ENCODE measurements at regions of chr2 and their contacts with region 1.

Region 1: GRCh38 chr2:203740780-203741281 is 34.4 kb downstream of the CD28 start:
- DNase-seq: peak; percentile 75
- H3K4me3 Mint-ChIP-seq: peak overlapping the region; percentile 48
- H3K27ac Mint-ChIP-seq: peak overlapping the region; percentile 94
- H3K4me1 Mint-ChIP-seq: peaks cover 90% of the 10 kb centered on the region
- H3K27me3 Mint-ChIP-seq: no peaks in the 10 kb centered on the region

Region 2: DNA sequence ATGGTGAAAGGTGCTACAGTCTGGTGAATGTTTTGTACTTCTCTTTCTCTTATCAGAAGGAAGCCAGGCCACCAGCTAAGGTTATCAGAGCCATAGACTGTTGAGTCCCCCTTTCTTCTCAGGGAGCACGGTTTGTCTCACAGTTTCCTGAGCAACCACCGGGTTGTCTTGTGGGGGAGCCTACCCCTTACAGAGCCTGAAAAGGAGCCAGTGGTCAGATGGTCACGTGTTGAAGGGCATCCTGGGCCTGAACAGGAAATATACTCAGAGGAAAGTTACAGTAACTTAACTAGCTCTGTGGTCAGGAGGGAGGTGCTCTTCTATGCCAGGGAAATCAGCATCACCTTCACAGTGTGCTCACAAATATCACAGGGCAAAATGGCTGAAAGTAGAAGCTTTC is 22.7 kb before region 1 on chr2:
- CTCF ChIA-PET with region 1: interaction called, 13 read pairs
- POLR2A ChIA-PET with region 1: interaction called, 13 read pairs
- DNase-seq: peak; percentile 79
- H3K4me3 Mint-ChIP-seq: peak overlapping the region; percentile 65
- H3K27ac Mint-ChIP-seq: peak overlapping the region; percentile 91
- H3K4me1 Mint-ChIP-seq: peaks cover 98% of the 10 kb centered on the region
- H3K27me3 Mint-ChIP-seq: no peaks in the 10 kb centered on the region

Region 3: DNA sequence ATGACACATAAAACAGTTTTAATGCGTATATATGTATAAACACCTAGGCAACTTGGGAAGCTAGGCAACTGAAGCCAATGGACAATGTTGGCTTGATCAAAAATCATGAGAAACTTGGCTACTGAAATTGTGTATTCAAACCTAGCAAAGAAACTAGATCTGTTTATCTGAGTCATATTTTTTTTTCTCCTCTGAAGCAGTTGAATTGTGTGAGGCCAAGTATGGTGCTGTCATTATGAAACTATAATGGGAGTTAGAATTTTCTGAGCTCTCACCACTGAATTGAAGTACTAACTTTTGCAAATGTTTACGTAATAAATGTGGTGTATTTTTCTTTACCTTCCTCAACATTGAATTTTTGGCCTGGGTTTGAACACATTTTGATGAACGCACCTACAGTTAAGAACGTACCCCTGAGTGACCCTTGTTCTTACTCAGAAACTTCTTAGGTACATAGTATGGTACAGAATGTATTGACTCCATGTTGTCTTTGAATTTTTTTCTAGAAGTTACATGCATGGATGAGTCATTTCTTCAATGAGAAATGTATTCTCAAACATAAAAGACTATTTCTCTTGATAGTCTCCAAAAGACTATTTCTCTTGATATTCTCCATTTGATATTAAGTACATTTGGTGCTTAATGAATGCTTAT is 10.6 kb before region 1 on chr2:
- CTCF ChIA-PET with region 1: interaction called, 18 read pairs
- POLR2A ChIA-PET with region 1: interaction called, 6 read pairs
- DNase-seq: no peak
- H3K4me3 Mint-ChIP-seq: peak overlapping the region; percentile 43
- H3K27ac Mint-ChIP-seq: peak overlapping the region; percentile 86
- H3K4me1 Mint-ChIP-seq: peaks cover 91% of the 10 kb centered on the region
- H3K27me3 Mint-ChIP-seq: no peaks in the 10 kb centered on the region

Region 4: DNA sequence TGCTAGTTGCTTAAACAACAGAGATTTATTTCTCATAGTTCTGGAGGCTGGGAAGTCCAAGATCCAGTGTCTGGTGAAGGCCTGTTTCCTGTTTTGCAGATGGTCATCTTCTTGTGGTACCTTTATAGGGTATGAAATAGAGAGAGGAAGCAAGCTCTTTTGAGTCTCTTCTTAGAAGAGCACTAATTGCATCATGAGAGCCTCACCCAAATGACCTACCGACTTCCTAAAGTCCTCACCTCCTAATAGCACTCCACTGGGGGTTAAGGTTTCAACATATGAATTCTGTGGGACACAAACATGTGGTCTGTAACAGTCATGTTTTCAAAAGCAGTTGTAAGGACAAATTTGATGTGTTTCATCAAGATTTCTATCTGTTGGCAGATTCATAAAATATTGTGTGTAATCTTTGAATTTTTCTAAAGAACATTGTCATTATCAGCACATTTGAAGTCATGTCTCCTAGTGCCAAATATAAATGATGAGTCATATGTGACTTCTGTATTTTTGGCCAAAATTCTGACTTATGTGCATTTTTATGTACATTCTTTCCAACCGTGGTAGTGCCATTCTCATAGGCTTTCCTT is 10.9 kb after region 1 on chr2:
- CTCF ChIA-PET with region 1: interaction called, 14 read pairs
- POLR2A ChIA-PET with region 1: interaction called, 4 read pairs
- DNase-seq: no peak
- H3K4me3 Mint-ChIP-seq: no peak overlapping the region
- H3K27ac Mint-ChIP-seq: no peak overlapping the region
- H3K4me1 Mint-ChIP-seq: peaks cover 39% of the 10 kb centered on the region
- H3K27me3 Mint-ChIP-seq: no peaks in the 10 kb centered on the region